Heart left ventricle (tissue), 16 donors: ENCODE measurements at regions of chr6 and their contacts with region 1.

Region 1: DNA sequence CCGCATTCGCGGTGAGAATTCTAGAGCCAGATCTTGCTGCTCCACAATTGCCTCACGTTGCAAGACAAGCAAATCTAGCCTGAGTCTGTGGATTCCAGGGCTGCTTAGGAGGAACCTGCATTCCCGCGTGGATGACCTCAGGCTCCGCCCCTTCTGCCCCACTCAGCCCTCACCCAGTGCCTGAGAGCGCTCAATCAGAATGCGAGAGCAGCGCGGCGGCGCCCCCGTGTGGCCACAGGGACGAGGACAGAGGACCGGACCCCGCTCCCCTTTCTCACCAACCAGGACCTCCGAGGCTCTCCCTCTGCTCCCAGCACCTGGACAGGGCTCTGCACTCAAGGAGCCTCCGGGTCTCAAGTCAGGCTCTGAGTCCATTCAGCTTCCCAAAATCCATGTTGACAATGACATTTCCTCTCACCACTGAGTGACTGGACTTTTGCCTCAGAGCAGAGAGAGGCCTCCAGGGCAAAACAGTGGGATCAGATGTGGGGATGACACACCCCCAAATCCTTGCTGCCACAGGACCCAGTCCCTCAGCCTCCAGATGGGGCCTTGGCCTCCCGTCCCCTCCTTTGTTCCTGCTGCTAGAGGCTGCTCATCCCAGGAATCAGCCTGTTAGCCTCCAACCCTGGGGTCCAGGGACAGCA is 52.0 kb downstream of the RPP21 start:
- DNase-seq: peak; percentile 60 to 91 (median 81)
- ATAC-seq: peak; percentile 87 to 98 (median 93)
- H3K4me3 ChIP-seq: no peak overlapping the region
- H3K27ac ChIP-seq: no peak overlapping the region
- H3K4me1 ChIP-seq: no peaks in the 10 kb centered on the region
- H3K27me3 ChIP-seq: peaks cover 0 to 47% (median 5%) of the 10 kb centered on the region in 9 donors
- CTCF ChIP-seq: peak; percentile 60 to 86 (median 76)
- POLR2A ChIP-seq: no peak

Region 2: DNA sequence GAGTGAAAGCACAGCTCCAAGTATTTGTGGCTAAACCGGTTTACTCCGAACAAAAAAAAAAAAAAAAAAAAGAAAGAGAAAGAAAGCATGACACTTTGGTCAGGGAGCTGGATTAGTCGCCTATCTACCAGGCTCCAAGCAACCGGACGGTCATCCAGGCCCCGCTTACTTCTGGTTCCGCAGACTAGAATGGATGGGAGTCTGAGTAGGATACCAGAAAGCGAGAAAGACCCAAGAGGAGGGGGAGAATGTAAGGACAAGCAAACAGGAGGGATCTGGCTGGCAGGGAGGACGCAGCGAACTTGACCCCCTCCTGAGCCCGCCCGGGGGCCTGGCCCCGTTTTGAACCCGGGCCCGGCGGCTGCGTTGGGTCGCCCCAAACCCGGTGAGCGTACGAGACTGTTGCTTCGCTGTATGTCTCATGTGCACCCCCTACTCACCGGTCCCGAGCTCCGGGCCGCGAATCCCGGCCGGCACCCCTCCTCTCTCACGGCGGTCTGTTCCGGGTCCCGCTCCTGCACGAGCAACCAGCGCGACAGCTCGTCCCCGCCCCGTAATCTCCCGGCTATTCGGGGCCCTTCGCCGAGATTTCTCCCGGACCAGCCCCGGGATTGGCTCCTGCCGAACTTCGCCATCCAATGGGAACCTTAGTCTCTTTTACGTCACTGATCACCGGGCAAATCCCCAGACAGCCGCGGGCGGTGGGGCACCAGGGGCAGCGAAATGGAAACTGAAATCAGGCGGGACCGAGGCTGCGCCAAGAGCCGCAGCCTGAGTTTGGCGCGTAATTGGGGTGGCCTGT is 183.9 kb before region 1 on chr6 and contains the start of gene TRIM26:
- intact Hi-C with region 1: loop called in 8 of 10 experiments (anchors 5 to 10 kb)
- DNase-seq: peak; percentile 98
- ATAC-seq: peak; percentile 96 to 99 (median 97)
- H3K4me3 ChIP-seq: peak within 1 kb of the TSS; percentile 55 to 98 (median 83)
- H3K27ac ChIP-seq: peak within 1 kb of the TSS; percentile 85 to 99 (median 97)
- H3K4me1 ChIP-seq: peaks cover 2 to 46% (median 30%) of the 10 kb centered on the region in 12 donors
- H3K27me3 ChIP-seq: no peaks in the 10 kb centered on the region
- CTCF ChIP-seq: no peak
- POLR2A ChIP-seq: peak; percentile 94 to 99
- total RNA-seq, gene TRIM26: 19.1 to 37.4 (median 24.5) TPM

Region 3: DNA sequence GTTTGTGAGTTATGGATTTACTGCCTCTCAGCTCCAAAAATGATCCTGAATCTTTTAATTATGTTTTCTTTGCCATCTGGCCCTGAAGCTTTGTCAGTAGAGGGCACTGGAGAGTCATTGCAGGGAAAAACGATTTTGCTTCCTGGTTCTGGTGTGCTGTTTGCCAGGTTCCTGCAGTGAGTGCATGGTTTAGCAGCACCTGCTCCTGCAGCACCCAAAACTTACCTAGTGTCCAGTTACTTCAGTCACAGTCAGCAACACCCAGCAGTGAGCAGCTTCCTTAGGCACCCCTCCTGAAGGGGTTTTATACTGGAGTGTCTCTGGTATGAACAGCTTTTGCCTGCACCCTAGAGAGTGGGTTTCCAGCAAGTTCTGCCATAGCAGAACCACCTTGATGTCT is 177.7 kb before region 1 on chr6:
- intact Hi-C with region 1: loop called in 9 of 10 experiments (anchors 5 to 10 kb)
- DNase-seq: peak in 1 of 5 donors; percentile 12
- ATAC-seq: peak in 3 of 4 donors; percentile 24 to 54 (median 40)
- H3K4me3 ChIP-seq: no peak overlapping the region
- H3K27ac ChIP-seq: no peak overlapping the region
- H3K4me1 ChIP-seq: peaks cover 0 to 9% (median 4%) of the 10 kb centered on the region in 12 donors
- H3K27me3 ChIP-seq: no peaks in the 10 kb centered on the region
- CTCF ChIP-seq: peak; percentile 62 to 84 (median 76)
- POLR2A ChIP-seq: no peak

Region 4: DNA sequence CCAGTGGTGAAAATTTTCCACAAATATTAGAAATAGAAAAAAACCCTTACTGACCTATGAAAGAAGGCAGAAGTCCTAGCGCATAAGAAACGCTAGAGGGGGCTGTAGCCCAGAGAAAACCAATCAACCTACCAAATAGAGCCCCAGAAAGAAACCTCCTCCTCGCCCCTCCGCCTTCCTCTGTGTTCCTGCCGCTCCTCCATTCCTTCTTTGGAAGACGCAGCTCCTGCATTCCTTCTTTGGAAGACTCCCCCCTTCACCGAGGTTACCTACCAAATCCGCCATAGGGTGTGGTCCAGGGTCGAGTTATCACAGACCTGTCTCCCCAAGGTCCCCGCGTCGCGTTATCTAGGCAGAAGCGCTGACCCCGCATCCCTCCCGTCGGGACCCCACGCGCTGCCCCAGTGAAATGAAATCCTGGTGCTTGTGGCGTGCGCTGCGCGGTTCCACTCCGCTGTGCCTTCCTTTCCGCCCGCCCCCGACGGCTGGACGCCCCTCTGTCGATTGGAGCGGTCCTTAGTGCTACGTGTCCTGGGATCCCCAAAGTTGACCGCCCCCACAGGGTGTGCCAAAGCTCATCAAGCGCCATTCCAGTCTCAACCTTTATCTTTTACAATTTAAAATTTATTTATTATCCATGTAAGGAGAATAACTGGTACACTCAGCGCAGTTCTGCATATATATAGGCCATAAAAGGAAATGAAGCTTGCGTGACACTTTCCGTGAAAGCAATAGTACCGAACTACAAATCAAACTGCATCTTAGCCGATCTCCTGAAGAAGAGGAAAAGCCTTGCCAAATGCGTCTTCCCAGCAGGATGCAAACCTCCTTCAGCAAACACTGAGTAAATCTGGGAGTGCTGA is 39.0 kb before region 1 on chr6:
- intact Hi-C with region 1: loop called in 3 of 10 experiments (anchors 2 to 5 kb)
- DNase-seq: peak in 2 of 5 donors; percentile 20 to 27
- ATAC-seq: peak in 3 of 4 donors; percentile 32 to 72 (median 52)
- H3K4me3 ChIP-seq: peak overlapping the region in 10 of 12 donors; percentile 1 to 40 (median 30)
- H3K27ac ChIP-seq: peak overlapping the region in 1 of 12 donors; percentile 81
- H3K4me1 ChIP-seq: peaks cover 0 to 8% (median 0%) of the 10 kb centered on the region in 12 donors
- H3K27me3 ChIP-seq: peaks cover 9 to 80% (median 36%) of the 10 kb centered on the region in 9 donors
- CTCF ChIP-seq: peak; percentile 43 to 81 (median 68)
- POLR2A ChIP-seq: no peak